ENCODE measurements at regions of chr20 and their contacts with region 1.

Region 1: GRCh38 chr20:13546497-13547131 is 92.1 kb downstream of the TASP1 start:
- DNase-seq: peak; percentile 89
- ATAC-seq: peak; percentile 56
- H3K4me3 Mint-ChIP-seq: no peak overlapping the region
- H3K27ac Mint-ChIP-seq: no peak overlapping the region
- H3K4me1 Mint-ChIP-seq: no peaks in the 10 kb centered on the region
- H3K27me3 Mint-ChIP-seq: no peaks in the 10 kb centered on the region
- CTCF ChIP-seq: peak; percentile 84

Region 2: DNA sequence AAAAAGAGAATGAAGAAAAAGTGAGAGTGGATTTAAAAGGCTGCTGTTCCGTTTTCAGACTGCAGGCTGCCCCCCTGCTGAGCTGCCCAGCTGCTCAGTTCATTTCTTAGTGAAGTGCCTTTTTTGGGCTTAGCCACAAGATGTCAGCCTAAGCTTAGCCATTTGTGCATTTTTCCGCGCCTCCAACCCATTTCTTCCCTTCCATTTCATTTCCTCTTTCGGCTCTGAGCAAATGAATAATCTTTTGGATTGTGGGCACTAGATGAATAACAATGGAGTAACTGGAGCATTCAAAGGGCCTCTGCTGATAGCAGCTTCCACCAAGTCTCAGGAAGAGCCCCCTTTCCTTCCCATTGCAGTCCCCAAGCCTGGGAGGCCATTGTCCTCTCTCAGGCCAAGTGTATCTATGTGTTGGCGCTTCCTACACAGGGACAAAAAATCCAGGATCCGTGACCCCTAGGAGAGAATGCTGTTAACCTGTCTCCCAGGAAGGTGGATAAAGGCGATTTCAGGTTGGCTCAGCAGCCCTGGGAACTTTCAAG is 621.3 kb before region 1 on chr20:
- CTCF ChIA-PET with region 1: interaction called, 10 read pairs
- POLR2A ChIA-PET with region 1: no interaction called
- intact Hi-C with region 1: no loop called
- DNase-seq: peak; percentile 41
- ATAC-seq: peak; percentile 80
- H3K4me3 Mint-ChIP-seq: no peak overlapping the region
- H3K27ac Mint-ChIP-seq: no peak overlapping the region
- H3K4me1 Mint-ChIP-seq: peaks cover 4% of the 10 kb centered on the region
- H3K27me3 Mint-ChIP-seq: no peaks in the 10 kb centered on the region
- CTCF ChIP-seq: peak; percentile 68

Region 3: GRCh38 chr20:13119583-13119982 is 427.0 kb before region 1 on chr20:
- CTCF ChIA-PET with region 1: interaction called, 53 read pairs
- POLR2A ChIA-PET with region 1: no interaction called
- intact Hi-C with region 1: loop called (anchors 2 kb)
- DNase-seq: peak; percentile 31
- ATAC-seq: peak; percentile 83
- H3K4me3 Mint-ChIP-seq: no peak overlapping the region
- H3K27ac Mint-ChIP-seq: no peak overlapping the region
- H3K4me1 Mint-ChIP-seq: no peaks in the 10 kb centered on the region
- H3K27me3 Mint-ChIP-seq: peaks cover 1% of the 10 kb centered on the region
- CTCF ChIP-seq: peak; percentile 94

Region 4: GRCh38 chr20:13458860-13459451 is 87.7 kb before region 1 on chr20:
- CTCF ChIA-PET with region 1: interaction called, 25 read pairs
- POLR2A ChIA-PET with region 1: no interaction called
- intact Hi-C with region 1: no loop called
- DNase-seq: peak; percentile 27
- ATAC-seq: peak; percentile 70
- H3K4me3 Mint-ChIP-seq: no peak overlapping the region
- H3K27ac Mint-ChIP-seq: no peak overlapping the region
- H3K4me1 Mint-ChIP-seq: no peaks in the 10 kb centered on the region
- H3K27me3 Mint-ChIP-seq: no peaks in the 10 kb centered on the region
- CTCF ChIP-seq: peak; percentile 64

Region 5: GRCh38 chr20:13501500-13501899 is 45.1 kb before region 1 on chr20:
- CTCF ChIA-PET with region 1: interaction called, 10 read pairs
- POLR2A ChIA-PET with region 1: no interaction called
- intact Hi-C with region 1: no loop called
- DNase-seq: no peak
- ATAC-seq: no peak
- H3K4me3 Mint-ChIP-seq: no peak overlapping the region
- H3K27ac Mint-ChIP-seq: no peak overlapping the region
- H3K4me1 Mint-ChIP-seq: no peaks in the 10 kb centered on the region
- H3K27me3 Mint-ChIP-seq: no peaks in the 10 kb centered on the region
- CTCF ChIP-seq: no peak

Region 6: DNA sequence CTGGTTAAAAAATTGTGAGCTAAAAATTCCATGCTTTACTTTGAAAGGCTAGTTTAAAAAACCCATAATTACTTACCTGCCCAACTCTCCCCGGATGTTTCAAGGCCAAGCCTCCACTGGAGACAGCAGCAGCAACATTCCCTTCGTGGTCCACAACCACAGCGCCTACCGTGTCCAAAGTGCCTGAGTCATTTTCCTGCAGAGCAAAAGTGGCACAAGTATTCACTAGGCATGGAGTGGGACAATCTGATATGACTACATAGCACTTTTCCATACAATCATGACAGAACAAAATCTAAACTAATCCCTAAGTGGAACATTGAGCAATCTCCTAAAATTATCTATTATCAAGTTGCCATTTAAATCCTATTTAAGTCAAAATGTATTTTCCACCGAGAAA is 12.7 kb before region 1 on chr20:
- CTCF ChIA-PET with region 1: interaction called, 52 read pairs
- POLR2A ChIA-PET with region 1: no interaction called
- intact Hi-C with region 1: no loop called
- DNase-seq: no peak
- ATAC-seq: no peak
- H3K4me3 Mint-ChIP-seq: no peak overlapping the region
- H3K27ac Mint-ChIP-seq: no peak overlapping the region
- H3K4me1 Mint-ChIP-seq: no peaks in the 10 kb centered on the region
- H3K27me3 Mint-ChIP-seq: no peaks in the 10 kb centered on the region
- CTCF ChIP-seq: no peak

Region 7: GRCh38 chr20:13717631-13718044 is 171.0 kb after region 1 on chr20:
- CTCF ChIA-PET with region 1: no interaction called
- POLR2A ChIA-PET with region 1: no interaction called
- intact Hi-C with region 1: no loop called
- DNase-seq: no peak
- ATAC-seq: no peak
- H3K4me3 Mint-ChIP-seq: no peak overlapping the region
- H3K27ac Mint-ChIP-seq: no peak overlapping the region
- H3K4me1 Mint-ChIP-seq: no peaks in the 10 kb centered on the region
- H3K27me3 Mint-ChIP-seq: no peaks in the 10 kb centered on the region
- CTCF ChIP-seq: no peak

Region 8: GRCh38 chr20:13784893-13785715 is 238.5 kb after region 1 on chr20 and contains the starts of genes ESF1 and NDUFAF5:
- CTCF ChIA-PET with region 1: no interaction called
- POLR2A ChIA-PET with region 1: no interaction called
- intact Hi-C with region 1: no loop called
- DNase-seq: peak; percentile 97
- ATAC-seq: peak; percentile 99
- H3K4me3 Mint-ChIP-seq: peak within 1 kb of the TSS; percentile 100
- H3K27ac Mint-ChIP-seq: peak within 1 kb of the TSS; percentile 98
- H3K4me1 Mint-ChIP-seq: peaks cover 52% of the 10 kb centered on the region
- H3K27me3 Mint-ChIP-seq: no peaks in the 10 kb centered on the region
- CTCF ChIP-seq: no peak
- total RNA-seq, gene ESF1: 19.9 to 20.4 TPM
- total RNA-seq, gene NDUFAF5: 25.9 to 28.4 TPM

Measured in activated CD8-positive, alpha-beta T cell treated with anti-CD3 and anti-CD28 coated beads for 36 hours (primary cell).